Activated CD4-positive, alpha-beta memory T cell treated with anti-CD3 and anti-CD28 coated beads for 36 hours (primary cell): ENCODE measurements at regions of chr3 and their contacts with region 1.

Region 1: DNA sequence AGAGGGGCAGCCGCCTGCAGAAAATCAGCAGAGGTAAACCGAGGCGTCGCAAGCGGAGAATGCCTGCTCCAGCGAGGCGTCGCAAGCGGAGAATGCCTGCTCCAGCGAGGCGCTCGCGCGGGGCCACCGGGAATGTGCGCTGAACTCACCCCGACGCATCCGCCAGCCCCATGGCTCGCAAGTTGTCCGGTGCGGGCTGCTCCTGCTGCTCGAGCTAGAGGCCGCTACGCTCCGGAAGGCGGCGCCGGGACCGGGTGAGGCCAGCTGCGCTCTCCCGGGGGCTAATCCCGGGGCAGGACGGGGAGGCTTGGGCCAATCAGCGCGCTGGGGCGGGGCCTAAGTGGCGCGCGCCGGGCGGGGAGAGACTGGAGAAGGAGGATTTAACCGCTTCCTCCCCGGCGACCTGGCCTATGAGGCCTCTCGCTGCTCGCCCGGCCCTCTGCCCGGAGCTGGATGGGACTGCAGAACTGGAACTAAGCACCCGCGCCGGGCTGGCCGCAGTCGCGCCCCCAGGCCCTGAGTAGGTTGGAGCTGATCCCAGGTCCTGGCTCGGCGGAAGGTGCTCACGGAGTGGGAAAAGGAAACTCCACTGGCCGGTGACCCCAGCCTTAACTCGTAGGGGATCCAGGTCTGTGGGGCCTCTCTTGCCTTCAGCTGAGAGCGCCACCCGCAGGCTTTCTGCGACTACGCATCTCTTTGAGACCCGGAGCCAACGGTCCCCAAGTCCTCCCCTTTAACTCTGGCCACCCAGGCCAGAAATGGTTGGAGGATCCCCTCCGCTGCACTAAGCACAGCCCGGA is at the start of gene SLC26A6:
- DNase-seq: peak; percentile 97
- H3K4me3 Mint-ChIP-seq: peak within 1 kb of the TSS; percentile 89
- H3K27ac Mint-ChIP-seq: no peak within 1 kb of the TSS
- H3K4me1 Mint-ChIP-seq: peaks cover 18% of the 10 kb centered on the region
- H3K27me3 Mint-ChIP-seq: no peaks in the 10 kb centered on the region
- total RNA-seq, gene SLC26A6: 47.7 to 52.4 TPM

Region 2: DNA sequence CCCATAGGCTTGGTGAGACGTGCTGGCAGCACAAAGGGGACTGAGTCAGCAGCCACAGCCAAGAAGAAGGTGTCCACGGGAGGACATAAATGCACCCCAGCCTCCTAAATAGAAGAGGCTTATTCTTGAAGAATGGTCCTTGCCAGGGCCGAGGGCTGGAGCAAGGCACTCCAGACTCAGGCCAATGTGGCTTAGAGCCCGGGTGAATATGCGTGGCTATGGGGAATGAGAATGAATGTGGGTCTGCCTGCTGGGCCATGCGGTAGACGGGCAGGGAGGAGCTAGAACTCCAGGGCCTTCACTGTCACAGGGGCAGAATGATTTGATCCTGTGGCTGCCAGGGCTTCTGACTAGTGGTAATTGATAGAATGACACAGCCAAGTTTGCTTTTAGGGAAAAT is 798.4 kb before region 1 on chr3:
- CTCF ChIA-PET with region 1: no interaction called
- POLR2A ChIA-PET with region 1: no interaction called
- intact Hi-C with region 1: no loop called
- DNase-seq: no peak
- H3K4me3 Mint-ChIP-seq: no peak overlapping the region
- H3K27ac Mint-ChIP-seq: no peak overlapping the region
- H3K4me1 Mint-ChIP-seq: no peaks in the 10 kb centered on the region
- H3K27me3 Mint-ChIP-seq: no peaks in the 10 kb centered on the region

Region 3: DNA sequence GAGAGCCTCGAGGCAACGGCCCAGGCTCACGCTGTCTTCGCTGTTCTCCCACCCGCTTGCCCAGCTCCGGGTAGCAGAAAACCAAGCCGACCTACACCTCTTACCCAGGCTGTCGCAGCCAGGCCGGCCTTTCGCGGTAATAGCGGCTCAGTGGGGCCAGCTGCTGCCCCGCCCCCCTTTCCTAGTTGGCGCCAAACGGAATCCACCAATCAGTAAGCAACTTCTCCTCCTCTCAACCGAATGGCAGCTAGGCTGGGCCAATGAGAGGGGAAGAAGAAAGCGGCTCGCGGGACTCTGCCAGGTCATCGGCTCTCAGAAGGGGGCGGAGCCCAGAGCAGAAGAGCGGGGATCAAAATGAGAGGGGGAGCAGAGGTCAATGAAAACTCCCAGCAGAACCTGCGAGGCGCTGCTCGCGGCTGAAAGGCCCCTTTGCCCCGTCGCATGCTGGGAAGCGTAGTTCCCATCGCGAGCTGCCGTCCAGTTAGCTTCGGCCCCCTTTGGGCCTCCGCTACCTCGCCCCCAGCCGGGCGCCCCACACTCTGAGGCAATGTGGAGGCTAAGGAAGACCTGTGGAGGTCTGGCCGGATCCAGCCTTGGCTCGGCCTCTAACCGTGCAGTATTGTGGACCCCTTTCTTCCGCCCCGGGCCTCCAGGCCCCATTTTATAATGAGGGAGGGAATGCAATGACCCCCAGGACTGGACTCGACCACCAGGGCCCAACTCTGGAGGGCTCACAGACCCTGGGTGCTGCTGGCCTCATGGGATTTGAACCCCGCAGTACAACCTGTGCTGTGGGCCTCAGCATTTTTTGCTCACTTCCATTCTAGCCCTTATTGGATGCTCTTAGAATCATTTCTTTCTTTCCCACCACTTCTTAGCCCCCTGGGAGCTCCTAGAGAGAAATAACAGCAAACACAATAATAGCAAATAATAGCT is 446.9 kb before region 1 on chr3 and contains the start of gene CDC25A:
- CTCF ChIA-PET with region 1: no interaction called
- POLR2A ChIA-PET with region 1: no interaction called
- intact Hi-C with region 1: loop called (anchors 1 kb)
- DNase-seq: peak; percentile 98
- H3K4me3 Mint-ChIP-seq: peak within 1 kb of the TSS; percentile 94
- H3K27ac Mint-ChIP-seq: peak within 1 kb of the TSS; percentile 66
- H3K4me1 Mint-ChIP-seq: peaks cover 14% of the 10 kb centered on the region
- H3K27me3 Mint-ChIP-seq: peaks cover 7% of the 10 kb centered on the region
- total RNA-seq, gene CDC25A: 33.7 to 36.8 TPM

Region 4: GRCh38 chr3:48285132-48285531 is 350.3 kb before region 1 on chr3:
- CTCF ChIA-PET with region 1: no interaction called
- POLR2A ChIA-PET with region 1: no interaction called
- intact Hi-C with region 1: no loop called
- DNase-seq: no peak
- H3K4me3 Mint-ChIP-seq: no peak overlapping the region
- H3K27ac Mint-ChIP-seq: no peak overlapping the region
- H3K4me1 Mint-ChIP-seq: peaks cover 3% of the 10 kb centered on the region
- H3K27me3 Mint-ChIP-seq: no peaks in the 10 kb centered on the region

Region 5: GRCh38 chr3:48565591-48566400 is 69.6 kb before region 1 on chr3:
- CTCF ChIA-PET with region 1: no interaction called
- POLR2A ChIA-PET with region 1: no interaction called
- intact Hi-C with region 1: no loop called
- DNase-seq: peak; percentile 30
- H3K4me3 Mint-ChIP-seq: no peak overlapping the region
- H3K27ac Mint-ChIP-seq: no peak overlapping the region
- H3K4me1 Mint-ChIP-seq: peaks cover 3% of the 10 kb centered on the region
- H3K27me3 Mint-ChIP-seq: no peaks in the 10 kb centered on the region

Region 6: DNA sequence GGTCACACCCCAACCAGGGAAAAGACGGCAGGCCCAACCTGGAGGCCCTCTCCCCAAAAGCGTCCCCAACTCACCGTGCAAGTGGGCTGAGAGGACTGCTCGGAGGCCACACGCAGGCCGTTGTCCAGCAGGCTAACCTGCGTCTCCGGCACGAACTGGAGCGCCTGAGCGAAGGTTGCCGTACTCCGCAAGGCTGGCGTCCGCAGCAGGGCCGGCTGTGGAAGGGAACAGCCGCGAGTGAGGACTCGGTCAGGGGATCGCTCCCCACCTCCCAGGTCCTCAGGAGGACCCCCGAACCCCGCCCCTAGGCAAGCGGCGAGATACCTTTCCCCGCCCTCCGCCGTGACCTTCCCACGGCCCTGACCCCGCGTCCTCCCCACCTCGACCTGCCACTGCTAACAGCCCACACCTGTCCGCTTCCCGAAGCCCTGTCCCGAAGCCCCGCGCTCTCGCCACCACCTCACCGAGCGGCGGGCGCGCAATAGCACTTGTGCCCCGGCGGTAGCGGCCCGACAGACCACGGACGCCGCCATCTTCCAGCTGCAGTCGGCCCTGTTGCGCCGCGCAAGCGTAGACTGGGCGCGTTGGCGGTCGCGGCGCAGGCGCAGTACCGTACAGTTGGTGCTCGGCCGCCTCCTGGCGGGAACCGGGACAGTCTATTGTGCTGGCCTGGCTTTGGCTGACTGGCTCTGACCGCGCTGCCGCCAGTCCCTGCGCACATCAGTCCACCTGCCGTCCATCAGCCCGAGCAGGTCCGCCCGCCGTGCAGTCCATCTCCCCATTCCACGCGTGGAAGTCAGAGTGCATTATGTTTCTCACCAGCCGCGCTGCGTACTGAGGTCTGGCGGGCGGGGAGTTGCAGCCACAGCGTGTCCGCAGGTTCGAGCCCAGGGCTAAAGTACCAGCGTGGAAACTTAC is 26.1 kb before region 1 on chr3 and contains the start of gene UQCRC1:
- CTCF ChIA-PET with region 1: interaction called, 38 read pairs
- POLR2A ChIA-PET with region 1: interaction called, 7 read pairs
- intact Hi-C with region 1: loop called (anchors 1 kb)
- DNase-seq: peak; percentile 95
- H3K4me3 Mint-ChIP-seq: peak within 1 kb of the TSS; percentile 99
- H3K27ac Mint-ChIP-seq: peak within 1 kb of the TSS; percentile 90
- H3K4me1 Mint-ChIP-seq: peaks cover 27% of the 10 kb centered on the region
- H3K27me3 Mint-ChIP-seq: no peaks in the 10 kb centered on the region
- total RNA-seq, gene UQCRC1: 251 to 259 TPM

Region 7: GRCh38 chr3:48656061-48656840 is 20.8 kb after region 1 on chr3:
- CTCF ChIA-PET with region 1: interaction called, 32 read pairs
- POLR2A ChIA-PET with region 1: interaction called, 11 read pairs
- intact Hi-C with region 1: loop called (anchors 1 kb)
- DNase-seq: peak; percentile 93
- H3K4me3 Mint-ChIP-seq: peak overlapping the region; percentile 79
- H3K27ac Mint-ChIP-seq: peak overlapping the region; percentile 84
- H3K4me1 Mint-ChIP-seq: peaks cover 5% of the 10 kb centered on the region
- H3K27me3 Mint-ChIP-seq: peaks cover 2% of the 10 kb centered on the region

Region 8: DNA sequence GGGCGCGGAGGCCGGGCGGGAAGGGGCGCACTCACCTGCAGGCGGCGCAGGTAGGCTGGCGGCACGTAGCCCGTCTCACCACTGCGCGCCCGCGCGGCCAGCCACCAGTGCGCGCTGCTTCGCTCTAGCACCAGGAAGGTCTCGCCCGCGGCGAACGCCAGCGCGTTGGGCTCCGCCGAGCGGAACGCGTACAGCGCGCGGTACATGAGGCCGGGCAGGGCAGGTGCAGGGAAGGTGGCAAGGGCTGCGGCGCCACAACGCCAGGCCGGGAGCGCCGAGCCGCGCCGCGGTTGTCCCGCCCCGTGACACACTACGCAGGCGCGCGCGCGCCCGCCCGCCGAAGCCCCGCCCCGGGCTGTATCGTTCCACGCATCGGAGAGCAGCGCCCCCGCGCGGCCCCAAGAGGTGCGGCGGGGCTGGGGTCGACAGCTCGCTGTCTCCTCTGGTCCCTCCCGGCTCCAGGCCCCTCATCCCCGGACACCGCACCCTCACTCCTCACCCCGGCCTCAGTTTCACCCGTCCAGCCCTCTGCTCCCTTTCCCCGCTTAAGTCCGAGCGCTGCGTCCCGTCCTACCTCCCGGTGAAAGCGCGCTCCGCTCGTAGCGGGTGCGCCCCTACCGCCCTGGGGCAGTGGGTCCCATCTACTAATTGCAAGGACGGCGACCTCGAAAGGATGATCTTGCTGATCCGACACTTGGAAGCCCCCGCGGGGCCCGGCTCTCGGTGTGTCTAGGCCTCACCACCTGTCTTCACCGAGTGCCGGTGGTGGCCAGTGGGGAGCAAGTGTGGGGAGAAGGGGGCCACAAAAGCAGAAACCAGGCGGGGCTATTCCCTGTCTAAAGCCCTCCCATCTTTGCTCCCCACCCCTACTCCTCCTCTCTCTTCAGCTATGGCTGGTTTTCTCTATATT is 50.4 kb after region 1 on chr3 and contains the start of gene NCKIPSD:
- CTCF ChIA-PET with region 1: interaction called, 10 read pairs
- POLR2A ChIA-PET with region 1: no interaction called
- intact Hi-C with region 1: no loop called
- DNase-seq: peak; percentile 93
- H3K4me3 Mint-ChIP-seq: peak within 1 kb of the TSS; percentile 78
- H3K27ac Mint-ChIP-seq: peak within 1 kb of the TSS; percentile 66
- H3K4me1 Mint-ChIP-seq: peaks cover 24% of the 10 kb centered on the region
- H3K27me3 Mint-ChIP-seq: no peaks in the 10 kb centered on the region
- total RNA-seq, gene NCKIPSD: 36.5 to 38.5 TPM